ENCODE measurements at regions of chr7 and their contacts with region 1.

Region 1: GRCh38 chr7:142782922-142783900 is 12.4 kb downstream of the PRSS2 start:
- DNase-seq: peak; percentile 90 to 91
- H3K4me3 ChIP-seq: no peak overlapping the region
- H3K4me3 Mint-ChIP-seq: peak overlapping the region; percentile 63
- H3K27ac Mint-ChIP-seq: no peak overlapping the region
- H3K4me1 ChIP-seq: no peaks in the 10 kb centered on the region
- H3K4me1 Mint-ChIP-seq: peaks cover 16% of the 10 kb centered on the region
- H3K27me3 ChIP-seq: no peaks in the 10 kb centered on the region
- H3K27me3 Mint-ChIP-seq: peaks cover 10% of the 10 kb centered on the region
- CTCF ChIP-seq: peak; percentile 98

Region 2: DNA sequence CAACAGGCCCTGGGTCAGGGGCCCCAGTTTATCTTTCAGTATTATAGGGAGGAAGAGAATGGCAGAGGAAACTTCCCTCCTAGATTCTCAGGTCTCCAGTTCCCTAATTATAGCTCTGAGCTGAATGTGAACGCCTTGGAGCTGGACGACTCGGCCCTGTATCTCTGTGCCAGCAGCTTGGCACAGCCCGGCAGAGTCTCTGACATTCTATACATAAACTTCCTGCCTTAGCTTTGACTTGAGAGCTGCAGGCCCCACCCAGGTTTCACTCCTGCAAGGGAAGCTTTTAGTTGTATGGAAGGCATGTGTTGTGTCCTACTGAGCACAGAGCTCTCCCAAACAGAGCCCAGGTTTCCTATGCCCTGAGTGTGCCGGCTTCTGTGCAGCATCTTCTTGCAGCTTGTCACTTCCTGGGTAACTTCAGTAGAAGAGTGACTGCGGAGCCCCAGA is 319.8 kb before region 1 on chr7:
- CTCF ChIA-PET with region 1: no interaction called
- POLR2A ChIA-PET with region 1: no interaction called
- intact Hi-C with region 1: no loop called
- DNase-seq: no peak
- H3K4me3 ChIP-seq: no peak overlapping the region
- H3K4me3 Mint-ChIP-seq: no peak overlapping the region
- H3K27ac Mint-ChIP-seq: no peak overlapping the region
- H3K4me1 ChIP-seq: peaks cover 11% of the 10 kb centered on the region
- H3K4me1 Mint-ChIP-seq: no peaks in the 10 kb centered on the region
- H3K27me3 ChIP-seq: no peaks in the 10 kb centered on the region
- H3K27me3 Mint-ChIP-seq: peaks cover 25% of the 10 kb centered on the region
- CTCF ChIP-seq: no peak

Region 3: DNA sequence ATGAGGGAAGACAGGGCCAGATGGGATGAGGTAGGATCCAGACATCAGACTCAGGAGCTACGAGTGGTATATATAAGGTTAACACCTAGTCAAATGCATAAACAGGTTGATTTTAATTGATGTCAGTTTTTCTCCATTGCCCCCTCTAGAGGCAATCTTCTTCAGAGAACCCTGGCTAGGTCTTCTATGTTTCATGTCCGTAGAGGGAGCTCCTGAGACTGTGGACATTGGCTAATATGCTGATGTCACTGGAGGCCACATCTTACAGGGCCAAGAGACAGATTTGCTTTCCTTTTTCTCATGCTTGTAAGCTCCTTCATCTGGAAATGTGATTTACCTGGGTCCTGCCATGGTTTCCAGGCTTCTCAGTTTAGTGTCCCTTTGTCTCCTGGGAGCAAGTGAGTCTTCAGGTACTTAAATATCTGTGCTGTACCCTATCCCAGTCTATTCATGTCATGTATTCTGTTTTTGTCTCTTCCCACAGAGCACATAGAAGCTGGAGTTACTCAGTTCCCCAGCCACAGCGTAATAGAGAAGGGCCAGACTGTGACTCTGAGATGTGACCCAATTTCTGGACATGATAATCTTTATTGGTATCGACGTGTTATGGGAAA is 195.5 kb before region 1 on chr7:
- CTCF ChIA-PET with region 1: interaction called, 10 read pairs
- POLR2A ChIA-PET with region 1: no interaction called
- intact Hi-C with region 1: no loop called
- DNase-seq: peak; percentile 59 to 63
- H3K4me3 ChIP-seq: no peak overlapping the region
- H3K4me3 Mint-ChIP-seq: no peak overlapping the region
- H3K27ac Mint-ChIP-seq: no peak overlapping the region
- H3K4me1 ChIP-seq: 0 out of 2 replicates have a peak, but pooled peaks cover 5% of the 10 kb centered on the region
- H3K4me1 Mint-ChIP-seq: peaks cover 8% of the 10 kb centered on the region
- H3K27me3 ChIP-seq: no peaks in the 10 kb centered on the region
- H3K27me3 Mint-ChIP-seq: no peaks in the 10 kb centered on the region
- CTCF ChIP-seq: peak; percentile 53 to 92

Region 4: DNA sequence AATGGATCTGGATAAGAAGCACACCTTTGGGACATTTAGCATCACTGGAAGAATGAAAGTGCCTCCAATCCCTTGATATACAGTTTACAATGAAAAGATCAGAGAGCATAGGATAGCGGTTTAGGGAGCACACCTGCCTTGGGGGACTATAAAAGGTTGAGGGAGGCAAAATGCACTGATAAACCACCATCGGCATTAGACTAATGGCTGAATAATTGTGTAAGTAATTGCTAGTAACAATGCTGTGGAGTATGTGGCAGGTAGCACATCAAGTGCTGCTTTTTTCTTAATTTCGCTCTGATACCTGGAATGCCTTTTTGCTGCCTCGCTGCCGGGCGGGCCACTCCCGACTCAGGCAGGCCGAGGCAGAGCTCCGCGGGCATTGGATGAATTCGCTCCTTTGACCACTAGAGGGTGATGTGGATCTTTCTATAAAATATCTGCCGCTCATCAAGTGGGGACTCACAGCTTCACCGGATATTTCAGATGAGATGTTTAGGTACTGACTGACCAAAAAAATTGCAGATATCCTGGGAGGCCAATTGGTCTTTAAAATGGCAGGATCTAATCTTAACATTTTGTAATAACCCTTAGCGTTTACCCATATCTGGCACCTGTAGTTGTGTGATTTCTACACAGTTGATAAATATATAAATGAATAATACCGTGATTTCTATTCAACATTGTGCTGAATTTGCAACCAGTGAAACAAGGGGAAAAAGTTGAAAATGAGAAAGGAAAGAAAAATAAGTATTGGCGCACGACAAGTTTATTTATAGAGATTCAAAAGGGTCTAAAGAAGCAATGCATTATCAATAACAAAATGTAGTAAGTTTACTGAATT is 150.7 kb before region 1 on chr7:
- CTCF ChIA-PET with region 1: interaction called, 124 read pairs
- POLR2A ChIA-PET with region 1: no interaction called
- intact Hi-C with region 1: loop called (anchors 1 kb)
- DNase-seq: peak; percentile 48 to 76
- H3K4me3 ChIP-seq: no peak overlapping the region
- H3K4me3 Mint-ChIP-seq: no peak overlapping the region
- H3K27ac Mint-ChIP-seq: no peak overlapping the region
- H3K4me1 ChIP-seq: no peaks in the 10 kb centered on the region
- H3K4me1 Mint-ChIP-seq: no peaks in the 10 kb centered on the region
- H3K27me3 ChIP-seq: peaks cover 1% of the 10 kb centered on the region
- H3K27me3 Mint-ChIP-seq: peaks cover 20% of the 10 kb centered on the region
- CTCF ChIP-seq: peak; percentile 72 to 74

Region 5: GRCh38 chr7:142689439-142690120 is 93.6 kb before region 1 on chr7:
- CTCF ChIA-PET with region 1: interaction called, 10 read pairs
- POLR2A ChIA-PET with region 1: no interaction called
- intact Hi-C with region 1: loop called (anchors 1 kb)
- DNase-seq: no peak
- H3K4me3 ChIP-seq: no peak overlapping the region
- H3K4me3 Mint-ChIP-seq: no peak overlapping the region
- H3K27ac Mint-ChIP-seq: no peak overlapping the region
- H3K4me1 ChIP-seq: no peaks in the 10 kb centered on the region
- H3K4me1 Mint-ChIP-seq: no peaks in the 10 kb centered on the region
- H3K27me3 ChIP-seq: no peaks in the 10 kb centered on the region
- H3K27me3 Mint-ChIP-seq: peaks cover 7% of the 10 kb centered on the region
- CTCF ChIP-seq: no peak

Region 6: GRCh38 chr7:142739923-142740492 is 43.2 kb before region 1 on chr7:
- CTCF ChIA-PET with region 1: interaction called, 15 read pairs
- POLR2A ChIA-PET with region 1: no interaction called
- intact Hi-C with region 1: loop called (anchors 1 kb)
- DNase-seq: peak in 1 of 2 experiments; percentile 37
- H3K4me3 ChIP-seq: no peak overlapping the region
- H3K4me3 Mint-ChIP-seq: no peak overlapping the region
- H3K27ac Mint-ChIP-seq: no peak overlapping the region
- H3K4me1 ChIP-seq: no peaks in the 10 kb centered on the region
- H3K4me1 Mint-ChIP-seq: no peaks in the 10 kb centered on the region
- H3K27me3 ChIP-seq: no peaks in the 10 kb centered on the region
- H3K27me3 Mint-ChIP-seq: peaks cover 19% of the 10 kb centered on the region
- CTCF ChIP-seq: peak; percentile 37 to 58

Region 7: GRCh38 chr7:142811154-142811737 is 28.0 kb after region 1 on chr7:
- CTCF ChIA-PET with region 1: interaction called, 25 read pairs
- POLR2A ChIA-PET with region 1: no interaction called
- intact Hi-C with region 1: no loop called
- DNase-seq: peak in 1 of 2 experiments; percentile 44
- H3K4me3 ChIP-seq: no peak overlapping the region
- H3K4me3 Mint-ChIP-seq: no peak overlapping the region
- H3K27ac Mint-ChIP-seq: no peak overlapping the region
- H3K4me1 ChIP-seq: peaks cover 27% of the 10 kb centered on the region
- H3K4me1 Mint-ChIP-seq: peaks cover 35% of the 10 kb centered on the region
- H3K27me3 ChIP-seq: no peaks in the 10 kb centered on the region
- H3K27me3 Mint-ChIP-seq: no peaks in the 10 kb centered on the region
- CTCF ChIP-seq: peak; percentile 56 to 68

Region 8: GRCh38 chr7:142853739-142854371 is 70.6 kb after region 1 on chr7:
- CTCF ChIA-PET with region 1: no interaction called
- POLR2A ChIA-PET with region 1: no interaction called
- intact Hi-C with region 1: no loop called
- DNase-seq: peak; percentile 64 to 75
- H3K4me3 ChIP-seq: peak overlapping the region; percentile 76
- H3K4me3 Mint-ChIP-seq: peak overlapping the region; percentile 91
- H3K27ac Mint-ChIP-seq: peak overlapping the region; percentile 47
- H3K4me1 ChIP-seq: peaks cover 6% of the 10 kb centered on the region; the same call in 1 of the 2 replicates
- H3K4me1 Mint-ChIP-seq: peaks cover 7% of the 10 kb centered on the region
- H3K27me3 ChIP-seq: no peaks in the 10 kb centered on the region; the same call in none of the 2 replicates
- H3K27me3 Mint-ChIP-seq: peaks cover 14% of the 10 kb centered on the region
- CTCF ChIP-seq: peak; percentile 83 to 85

Region 9: DNA sequence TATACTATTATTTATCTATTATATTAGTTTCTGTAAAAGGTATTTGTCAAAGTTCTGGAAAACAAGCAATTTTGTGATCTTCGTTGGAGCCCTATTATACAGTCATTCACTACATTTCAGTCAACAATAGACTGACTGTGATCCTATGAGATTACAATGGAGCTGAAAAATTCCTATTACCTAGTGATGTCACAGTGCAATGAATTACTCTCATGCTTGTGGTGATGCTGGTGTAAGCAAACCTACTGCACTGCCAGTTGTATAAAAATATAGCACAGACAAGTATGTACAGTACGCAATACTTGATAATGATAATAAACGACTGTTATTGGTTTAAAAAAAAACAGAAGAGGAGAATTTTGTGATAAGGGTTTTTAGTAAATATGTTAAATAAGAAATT is 290.3 kb after region 1 on chr7:
- CTCF ChIA-PET with region 1: no interaction called
- POLR2A ChIA-PET with region 1: no interaction called
- intact Hi-C with region 1: no loop called
- DNase-seq: no peak
- H3K4me3 ChIP-seq: no peak overlapping the region
- H3K4me3 Mint-ChIP-seq: no peak overlapping the region
- H3K27ac Mint-ChIP-seq: no peak overlapping the region
- H3K4me1 ChIP-seq: no peaks in the 10 kb centered on the region
- H3K4me1 Mint-ChIP-seq: no peaks in the 10 kb centered on the region
- H3K27me3 ChIP-seq: no peaks in the 10 kb centered on the region
- H3K27me3 Mint-ChIP-seq: peaks cover 8% of the 10 kb centered on the region
- CTCF ChIP-seq: no peak

Region 10: DNA sequence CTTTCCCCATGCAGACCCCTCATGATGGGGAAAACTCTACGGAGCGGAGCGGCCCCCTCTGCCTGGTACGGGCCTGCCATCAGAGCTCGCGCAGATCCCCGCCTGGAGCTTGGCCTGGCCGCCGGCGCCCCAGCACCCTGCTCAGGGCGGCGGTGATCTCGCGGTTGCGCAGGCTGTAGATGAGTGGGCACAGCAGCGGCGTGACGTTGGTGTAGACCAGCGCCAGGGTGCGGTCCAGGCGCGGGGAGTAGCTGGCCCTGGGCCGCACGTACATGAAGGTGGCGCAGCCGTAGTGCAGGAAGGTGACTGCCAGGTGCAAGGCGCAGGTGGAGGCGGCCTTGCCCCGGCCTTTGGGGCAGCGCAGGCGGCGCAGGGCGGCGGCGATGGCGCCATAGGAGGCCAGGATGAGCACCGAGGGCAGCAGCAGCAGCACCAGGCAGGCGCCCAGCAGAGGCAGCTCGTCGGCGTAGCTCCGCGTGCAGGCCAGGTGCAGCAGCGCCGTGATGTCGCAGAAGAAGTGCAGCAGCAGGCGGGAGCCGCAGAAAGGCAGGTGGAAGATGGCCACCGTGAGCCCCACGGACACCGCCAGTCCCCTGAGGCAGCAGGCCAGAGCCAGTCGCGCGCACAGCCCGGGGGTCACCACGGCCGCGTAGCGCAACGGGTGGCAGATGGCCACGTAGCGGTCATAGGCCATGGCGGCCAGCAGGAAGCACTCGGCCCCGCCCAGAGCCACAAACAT is 727.8 kb after region 1 on chr7:
- CTCF ChIA-PET with region 1: no interaction called
- POLR2A ChIA-PET with region 1: no interaction called
- intact Hi-C with region 1: no loop called
- DNase-seq: no peak
- H3K4me3 ChIP-seq: no peak overlapping the region
- H3K4me3 Mint-ChIP-seq: no peak overlapping the region
- H3K27ac Mint-ChIP-seq: peak overlapping the region; percentile 17
- H3K4me1 ChIP-seq: peaks cover 38% of the 10 kb centered on the region
- H3K4me1 Mint-ChIP-seq: peaks cover 26% of the 10 kb centered on the region
- H3K27me3 ChIP-seq: no peaks in the 10 kb centered on the region
- H3K27me3 Mint-ChIP-seq: no peaks in the 10 kb centered on the region
- CTCF ChIP-seq: no peak

Measured in Caco-2 (cell line).